Mucosa of descending colon (tissue), 3 donors: ENCODE measurements at regions of chr10 and their contacts with region 1.

Region 1: GRCh38 chr10:103888113-103888841 is 29.7 kb downstream of the STN1 start:
- DNase-seq: peak; percentile 90 to 92 (median 92)
- ATAC-seq: peak; percentile 75
- H3K4me3 ChIP-seq: no peak overlapping the region
- H3K4me1 ChIP-seq: peaks cover 32% of the 10 kb centered on the region
- CTCF ChIP-seq: peak; percentile 52

Region 2: GRCh38 chr10:103828107-103828506 is 60.2 kb before region 1 on chr10:
- intact Hi-C with region 1: no loop called
- DNase-seq: no peak
- ATAC-seq: peak; percentile 85
- H3K4me3 ChIP-seq: no peak overlapping the region
- H3K4me1 ChIP-seq: peaks cover 21% of the 10 kb centered on the region
- CTCF ChIP-seq: no peak

Region 3: DNA sequence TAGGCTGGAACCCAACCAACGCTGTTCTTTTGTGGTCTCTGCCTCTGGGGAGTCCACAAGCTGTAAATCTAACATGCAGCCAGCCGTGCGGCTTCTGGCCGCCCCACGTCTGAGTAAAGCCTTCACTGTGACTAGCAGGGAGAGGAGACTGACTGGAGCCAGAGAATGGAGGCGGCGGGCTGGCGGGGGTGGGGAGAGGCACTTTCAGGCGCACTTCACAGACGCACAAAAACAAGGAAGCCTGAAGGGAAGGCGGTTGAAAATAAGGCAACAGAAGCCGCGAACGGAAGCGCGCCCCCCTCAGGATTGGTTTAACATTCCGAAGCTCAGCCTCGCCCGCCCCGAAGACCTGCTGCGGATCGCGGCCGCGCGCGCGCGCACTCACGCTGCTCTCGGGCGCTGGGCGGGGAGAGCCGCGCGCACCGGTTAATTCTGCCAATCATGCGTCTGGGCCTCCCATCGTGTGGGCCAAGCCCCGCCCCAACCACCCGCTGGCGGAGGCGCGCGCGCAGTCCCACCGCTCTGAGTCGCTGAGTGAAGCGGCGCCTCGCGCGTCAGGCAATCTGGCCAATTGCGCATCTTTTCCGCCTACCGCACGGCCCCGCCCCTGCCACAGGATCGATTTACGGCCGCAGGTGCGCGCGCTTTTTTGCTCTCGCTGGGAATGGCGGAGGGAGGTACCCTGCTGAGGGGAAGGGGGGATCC is 233.4 kb after region 1 on chr10 and contains the start of gene SFR1:
- intact Hi-C with region 1: loop called in 1 of 2 experiments (anchors 5 kb)
- DNase-seq: peak; percentile 99 to 100 (median 100)
- ATAC-seq: peak; percentile 94
- H3K4me3 ChIP-seq: peak within 1 kb of the TSS; percentile 38
- H3K4me1 ChIP-seq: peaks cover 9% of the 10 kb centered on the region
- CTCF ChIP-seq: peak; percentile 41
- total RNA-seq, gene SFR1: 5.7 to 8.6 (median 5.8) TPM

Region 4: DNA sequence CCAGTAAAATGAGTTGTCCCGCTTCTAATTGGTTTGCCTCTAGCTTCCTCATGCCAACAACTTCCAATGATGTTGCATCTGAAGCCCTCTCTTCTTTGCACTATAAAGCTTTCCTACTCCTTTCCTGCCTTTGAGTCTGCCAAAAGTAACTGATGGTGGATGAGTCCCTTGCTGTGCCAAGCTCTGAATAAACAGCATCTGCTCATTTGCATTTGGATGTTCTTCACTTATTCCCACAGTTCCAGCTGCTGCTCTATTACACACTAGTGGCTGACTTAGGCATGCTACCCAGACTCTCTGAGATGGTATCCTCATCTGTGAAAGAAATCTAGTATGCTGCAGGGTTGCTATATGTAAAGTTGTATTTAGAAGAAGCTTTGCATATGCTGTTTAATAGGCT is 258.6 kb after region 1 on chr10:
- intact Hi-C with region 1: loop called in 1 of 2 experiments (anchors 10 kb)
- DNase-seq: no peak
- ATAC-seq: no peak
- H3K4me3 ChIP-seq: no peak overlapping the region
- H3K4me1 ChIP-seq: no peaks in the 10 kb centered on the region
- CTCF ChIP-seq: no peak